ENCODE measurements at regions of chr18 and their contacts with region 1.

Region 1: DNA sequence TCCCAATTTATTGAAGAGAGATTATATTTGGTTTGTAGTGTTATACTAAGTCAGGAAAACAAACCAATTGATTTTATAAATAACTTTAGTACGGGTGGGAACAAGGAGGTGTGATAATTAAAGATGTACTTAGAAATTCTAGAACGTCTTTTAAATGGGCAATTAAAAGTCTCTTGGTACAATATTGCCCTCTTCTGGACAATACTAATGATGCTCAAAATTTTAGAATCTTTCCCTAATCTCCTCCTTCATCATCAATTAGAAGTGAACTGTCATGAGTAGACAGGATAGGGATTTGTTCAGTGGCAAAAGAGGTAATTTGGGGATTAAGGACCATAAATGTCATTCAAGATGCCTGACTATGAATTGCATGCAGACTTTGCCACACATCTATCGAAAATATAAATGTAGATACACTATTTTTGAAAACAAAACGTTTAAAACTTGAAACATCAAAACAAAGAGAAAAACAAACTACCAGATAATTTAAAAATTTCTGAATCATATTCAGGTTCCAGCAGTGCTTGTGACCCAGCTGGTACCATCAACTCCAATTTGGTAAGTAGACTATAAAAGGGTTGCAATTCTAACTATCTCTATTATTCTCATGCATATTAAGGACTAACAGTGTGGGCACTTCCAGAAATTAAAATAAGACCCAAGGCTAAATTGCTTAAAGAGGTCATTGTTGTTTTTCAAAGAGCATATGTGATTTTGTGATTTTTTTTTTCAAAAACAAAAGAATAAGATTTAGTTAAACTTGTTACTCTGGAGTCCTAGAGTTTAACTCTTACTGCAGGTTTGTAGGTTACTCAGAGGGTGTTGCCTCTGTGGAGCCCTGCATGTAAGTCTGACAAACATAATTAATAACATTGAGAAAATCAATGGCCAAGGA is 123.5 kb downstream of the LAMA3 start:
- DNase-seq: peak; percentile 32 to 59 (median 42)
- H3K4me3 ChIP-seq: no peak overlapping the region
- H3K27ac ChIP-seq: no peak overlapping the region
- H3K4me1 ChIP-seq: peaks cover 0 to 13% (median 3%) of the 10 kb centered on the region in 4 experiments
- H3K27me3 ChIP-seq: no peaks in the 10 kb centered on the region

Region 2: GRCh38 chr18:23619388-23619881 is 193.4 kb before region 1 on chr18:
- CTCF ChIA-PET with region 1: interaction called, 17 read pairs
- POLR2A ChIA-PET with region 1: interaction called, 3 read pairs
- DNase-seq: peak; percentile 38 to 66 (median 56)
- H3K4me3 ChIP-seq: peak overlapping the region in 6 of 7 experiments; percentile 48 to 73 (median 66)
- H3K27ac ChIP-seq: no peak overlapping the region
- H3K4me1 ChIP-seq: peaks cover 2 to 20% (median 15%) of the 10 kb centered on the region in 4 experiments
- H3K27me3 ChIP-seq: peaks cover 0 to 15% (median 12%) of the 10 kb centered on the region in 5 experiments

Region 3: GRCh38 chr18:23627320-23627719 is 185.5 kb before region 1 on chr18:
- CTCF ChIA-PET with region 1: interaction called, 17 read pairs
- POLR2A ChIA-PET with region 1: interaction called, 3 read pairs
- DNase-seq: peak in 1 of 3 donors; percentile 16
- H3K4me3 ChIP-seq: no peak overlapping the region
- H3K27ac ChIP-seq: no peak overlapping the region
- H3K4me1 ChIP-seq: no peaks in the 10 kb centered on the region
- H3K27me3 ChIP-seq: no peaks in the 10 kb centered on the region

Region 4: GRCh38 chr18:23719634-23720201 is 93.1 kb before region 1 on chr18:
- CTCF ChIA-PET with region 1: no interaction called
- POLR2A ChIA-PET with region 1: no interaction called
- DNase-seq: no peak
- H3K4me3 ChIP-seq: no peak overlapping the region
- H3K27ac ChIP-seq: no peak overlapping the region
- H3K4me1 ChIP-seq: peaks cover 3 to 5% (median 4%) of the 10 kb centered on the region in 4 experiments
- H3K27me3 ChIP-seq: no peaks in the 10 kb centered on the region

Region 5: GRCh38 chr18:23798249-23798648 is 14.5 kb before region 1 on chr18:
- CTCF ChIA-PET with region 1: interaction called, 10 read pairs
- POLR2A ChIA-PET with region 1: no interaction called
- DNase-seq: no peak
- H3K4me3 ChIP-seq: no peak overlapping the region
- H3K27ac ChIP-seq: no peak overlapping the region
- H3K4me1 ChIP-seq: peaks cover 0 to 9% (median 5%) of the 10 kb centered on the region in 4 experiments
- H3K27me3 ChIP-seq: no peaks in the 10 kb centered on the region

Region 6: DNA sequence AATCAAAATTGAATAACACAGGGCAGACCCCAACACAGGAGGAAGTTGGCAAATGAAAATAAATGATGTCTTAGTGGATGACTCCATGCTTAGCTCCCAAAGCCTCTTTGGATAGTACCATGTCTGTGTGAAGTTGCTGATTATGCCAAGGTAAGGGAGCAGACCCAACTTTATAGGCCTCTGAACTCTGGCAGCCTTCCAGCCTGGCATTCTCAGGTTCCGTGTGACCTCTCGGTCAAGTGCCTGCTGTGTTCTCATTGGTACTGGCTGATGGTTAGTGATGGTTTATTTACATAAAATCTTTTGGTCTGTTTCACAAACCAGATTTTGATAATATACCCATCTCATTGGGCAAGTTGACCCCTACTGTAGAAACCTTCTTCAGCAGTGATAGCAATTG is 89.6 kb after region 1 on chr18:
- CTCF ChIA-PET with region 1: no interaction called
- POLR2A ChIA-PET with region 1: no interaction called
- DNase-seq: no peak
- H3K4me3 ChIP-seq: no peak overlapping the region
- H3K27ac ChIP-seq: no peak overlapping the region
- H3K4me1 ChIP-seq: peaks cover 0 to 9% (median 7%) of the 10 kb centered on the region in 4 experiments
- H3K27me3 ChIP-seq: no peaks in the 10 kb centered on the region

Region 7: DNA sequence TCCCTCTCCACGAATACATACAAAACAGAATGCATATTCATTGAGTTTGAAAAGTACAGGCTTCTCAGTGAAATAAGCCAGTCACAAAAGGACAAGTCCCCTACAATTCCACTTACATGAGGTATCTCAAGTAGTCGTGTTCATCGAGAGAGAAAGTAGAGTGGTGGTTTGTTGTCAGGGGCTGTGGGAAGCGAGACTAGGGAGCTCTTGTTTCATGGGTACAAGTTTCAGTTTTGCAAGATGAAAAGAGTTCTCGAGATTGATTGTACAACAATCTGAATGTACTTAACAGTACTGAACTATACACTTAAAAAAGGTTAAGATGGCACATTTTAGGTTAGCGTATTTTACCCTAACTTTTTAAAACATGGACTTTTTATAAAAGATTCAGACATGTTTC is 130.3 kb after region 1 on chr18:
- CTCF ChIA-PET with region 1: no interaction called
- POLR2A ChIA-PET with region 1: no interaction called
- DNase-seq: no peak
- H3K4me3 ChIP-seq: no peak overlapping the region
- H3K27ac ChIP-seq: no peak overlapping the region
- H3K4me1 ChIP-seq: peaks cover 0 to 4% (median 0%) of the 10 kb centered on the region in 4 experiments
- H3K27me3 ChIP-seq: no peaks in the 10 kb centered on the region

Measured in common myeloid progenitor, CD34-positive (primary cell).